AG04449 (cell line): ENCODE measurements at regions of chr10 and their contacts with region 1.

Region 1: DNA sequence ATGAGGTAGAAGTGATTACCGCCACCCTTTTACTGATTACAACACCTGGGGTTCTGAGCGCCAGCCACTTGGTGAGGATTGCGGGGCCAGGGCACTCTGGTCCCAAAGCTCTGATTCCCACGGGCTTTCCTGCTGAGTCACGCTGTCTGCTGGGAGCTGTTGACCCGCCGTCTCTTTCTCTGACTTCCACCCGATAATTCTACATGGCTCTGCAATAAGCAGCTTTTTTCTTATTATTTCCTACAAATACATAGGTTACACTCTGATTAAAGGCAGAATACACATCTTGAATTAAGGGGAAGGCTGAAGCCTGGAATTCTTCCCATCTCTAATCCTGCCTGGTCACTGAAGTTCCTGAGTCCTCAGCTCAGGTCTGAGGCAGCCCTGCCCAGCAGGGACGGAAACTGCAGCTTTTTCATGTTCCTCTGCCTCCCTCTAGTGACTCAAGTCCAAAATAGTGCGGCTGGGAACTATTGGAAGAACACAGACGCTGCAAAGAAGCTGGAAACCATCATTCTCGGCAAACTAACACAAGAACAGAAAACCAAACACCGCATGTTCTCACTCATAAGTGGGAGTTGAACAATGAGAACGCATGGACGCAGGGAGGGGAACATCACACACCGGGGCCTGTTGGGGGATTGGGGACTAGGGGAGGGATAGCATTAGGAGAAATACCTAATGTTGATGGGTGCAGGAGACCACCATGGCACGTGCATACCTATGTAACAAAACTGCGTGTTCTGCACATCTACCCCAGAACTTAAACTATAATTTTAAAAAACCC is 178.3 kb downstream of the PRKCQ start:
- DNase-seq: peak; percentile 70
- H3K4me3 ChIP-seq: peak overlapping the region; percentile 39
- CTCF ChIP-seq: peak; percentile 80

Region 2: DNA sequence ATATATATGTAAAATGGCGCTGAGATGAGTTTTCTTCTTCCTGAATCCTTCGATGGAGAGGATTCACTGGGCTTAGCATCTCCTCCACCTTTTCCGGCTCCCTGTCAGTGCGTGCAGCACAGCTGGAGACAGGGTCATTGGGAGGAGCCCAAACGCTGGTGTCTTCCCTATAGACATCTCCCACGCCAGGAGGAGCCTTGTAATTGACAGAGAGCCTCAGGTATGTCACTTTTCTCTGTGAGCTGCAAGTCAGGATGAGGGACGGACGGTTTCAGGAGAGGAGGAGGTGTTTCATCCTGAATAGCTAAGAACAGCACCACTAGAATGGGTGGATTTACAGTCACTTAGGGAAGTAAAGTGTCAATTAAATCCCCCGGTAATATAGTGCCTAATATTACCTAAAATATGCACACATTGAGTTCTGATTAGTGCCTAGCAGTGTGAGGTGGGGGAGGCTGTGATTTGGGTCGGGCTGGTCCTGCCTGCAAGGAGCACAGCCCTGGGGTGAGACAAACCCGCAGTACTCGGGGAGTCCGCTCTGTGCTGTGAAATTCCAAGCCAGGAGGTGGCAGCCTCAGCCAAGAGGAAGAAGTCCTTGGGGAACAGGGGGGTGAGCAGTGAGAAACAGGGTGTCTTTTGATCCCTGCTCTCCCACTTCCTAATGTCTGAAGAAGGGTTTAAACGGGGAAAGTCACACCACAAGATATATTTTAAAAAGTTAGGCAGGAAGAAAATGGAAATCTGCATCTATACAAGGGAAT is 452.6 kb before region 1 on chr10:
- CTCF ChIA-PET with region 1: interaction called, 35 read pairs
- POLR2A ChIA-PET with region 1: no interaction called
- DNase-seq: no peak
- H3K4me3 ChIP-seq: no peak overlapping the region
- CTCF ChIP-seq: peak; percentile 67

Region 3: GRCh38 chr10:6088721-6089390 is 312.9 kb before region 1 on chr10 and contains the start of gene RBM17:
- CTCF ChIA-PET with region 1: interaction called, 155 read pairs
- POLR2A ChIA-PET with region 1: interaction called, 3 read pairs
- DNase-seq: peak; percentile 77
- H3K4me3 ChIP-seq: peak within 1 kb of the TSS; percentile 91
- CTCF ChIP-seq: peak; percentile 99

Region 4: DNA sequence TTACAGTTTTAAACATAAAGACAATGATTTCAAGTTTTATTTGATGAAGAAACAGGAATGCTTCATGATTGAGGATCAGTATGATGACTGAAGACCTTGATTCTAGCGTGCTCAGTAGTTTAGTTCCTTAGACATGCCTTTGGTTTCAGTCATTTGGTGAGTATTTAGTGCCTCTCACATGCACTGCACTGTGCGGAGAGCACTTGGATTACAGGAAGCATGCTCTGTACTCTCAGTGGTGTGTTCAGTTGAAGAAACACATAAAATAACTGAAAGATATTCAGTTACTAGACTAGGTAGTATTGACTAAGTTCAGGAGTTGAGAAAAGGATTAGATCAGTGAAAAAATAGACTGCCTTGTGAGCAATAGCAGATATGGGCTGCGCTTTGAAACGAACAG is 287.5 kb before region 1 on chr10:
- CTCF ChIA-PET with region 1: interaction called, 132 read pairs
- POLR2A ChIA-PET with region 1: no interaction called
- DNase-seq: no peak
- H3K4me3 ChIP-seq: no peak overlapping the region
- CTCF ChIP-seq: no peak

Region 5: GRCh38 chr10:6163364-6164270 is 238.1 kb before region 1 on chr10:
- CTCF ChIA-PET with region 1: interaction called, 13 read pairs
- POLR2A ChIA-PET with region 1: no interaction called
- DNase-seq: no peak
- H3K4me3 ChIP-seq: peak overlapping the region; percentile 74
- CTCF ChIP-seq: no peak

Region 6: DNA sequence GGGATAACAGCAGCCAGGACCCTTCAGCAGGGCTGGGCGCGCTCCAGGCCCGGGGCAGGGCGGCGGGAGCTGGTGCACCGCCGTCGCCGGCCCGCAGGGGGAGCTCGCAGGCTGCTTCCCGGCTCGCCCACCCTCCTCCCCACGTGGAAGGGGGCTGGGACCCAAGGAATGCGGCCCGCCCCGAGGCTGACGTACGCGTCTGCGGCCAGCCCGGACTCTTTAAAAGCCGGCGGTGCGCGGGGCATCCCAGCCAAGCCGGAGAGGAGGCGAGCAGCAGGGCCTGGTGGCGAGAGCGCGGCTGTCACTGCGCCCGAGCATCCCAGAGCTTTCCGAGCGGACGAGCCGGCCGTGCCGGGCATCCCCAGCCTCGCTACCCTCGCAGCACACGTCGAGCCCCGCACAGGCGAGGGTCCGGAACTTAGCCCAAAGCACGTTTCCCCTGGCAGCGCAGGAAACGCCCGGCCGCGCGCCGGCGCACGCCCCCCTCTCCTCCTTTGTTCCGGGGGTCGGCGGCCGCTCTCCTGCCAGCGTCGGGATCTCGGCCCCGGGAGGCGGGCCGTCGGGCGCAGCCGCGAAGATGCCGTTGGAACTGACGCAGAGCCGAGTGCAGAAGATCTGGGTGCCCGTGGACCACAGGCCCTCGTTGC is 198.9 kb before region 1 on chr10 and contains the start of gene PFKFB3:
- CTCF ChIA-PET with region 1: interaction called, 278 read pairs
- POLR2A ChIA-PET with region 1: interaction called, 201 read pairs
- DNase-seq: no peak
- H3K4me3 ChIP-seq: peak within 1 kb of the TSS; percentile 83
- CTCF ChIP-seq: peak; percentile 87

Region 7: DNA sequence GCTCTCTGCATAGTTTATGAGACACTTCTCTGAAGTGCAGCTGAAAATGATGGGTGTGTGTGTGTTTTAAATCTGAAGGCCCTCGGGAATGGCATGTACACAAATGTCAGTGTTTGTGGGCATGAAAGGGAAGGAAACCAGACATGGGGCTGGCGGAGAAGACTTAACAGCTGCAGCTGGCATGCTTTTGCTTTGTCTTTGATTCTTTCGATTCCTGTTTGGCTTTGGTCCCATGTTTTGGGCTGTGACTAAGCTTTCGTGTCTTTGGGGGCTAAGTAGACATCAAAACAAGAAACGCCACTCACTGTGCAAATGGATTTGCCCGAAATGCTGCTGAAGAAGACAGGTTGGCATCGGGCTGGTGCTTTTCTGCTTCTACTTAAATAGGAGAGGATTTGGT is 19.7 kb before region 1 on chr10:
- CTCF ChIA-PET with region 1: interaction called, 11 read pairs
- POLR2A ChIA-PET with region 1: no interaction called
- DNase-seq: no peak
- H3K4me3 ChIP-seq: no peak overlapping the region
- CTCF ChIP-seq: no peak

Region 8: GRCh38 chr10:6445501-6446316 is 44.0 kb after region 1 on chr10:
- CTCF ChIA-PET with region 1: no interaction called
- POLR2A ChIA-PET with region 1: no interaction called
- DNase-seq: no peak
- H3K4me3 ChIP-seq: no peak overlapping the region
- CTCF ChIP-seq: peak; percentile 55

Region 9: GRCh38 chr10:6621536-6621935 is 219.8 kb after region 1 on chr10:
- CTCF ChIA-PET with region 1: no interaction called
- POLR2A ChIA-PET with region 1: no interaction called
- DNase-seq: no peak
- H3K4me3 ChIP-seq: no peak overlapping the region
- CTCF ChIP-seq: no peak